ENCODE measurements at regions of chr14 and their contacts with region 1.

Region 1: GRCh38 chr14:104723648-104724406 is at the start of gene ADSS1:
- DNase-seq: peak; percentile 46
- H3K4me3 ChIP-seq: peak within 1 kb of the TSS; percentile 7 to 52 (median 35)
- H3K27ac ChIP-seq: no peak within 1 kb of the TSS
- H3K4me1 ChIP-seq: peaks cover 5% of the 10 kb centered on the region
- H3K27me3 ChIP-seq: no peaks in the 10 kb centered on the region
- CTCF ChIP-seq: peak; percentile 93 to 97
- POLR2A ChIP-seq: peak; percentile 67
- total RNA-seq, gene ADSS1: 1.9 and 2.7 TPM in 2 replicates

Region 2: DNA sequence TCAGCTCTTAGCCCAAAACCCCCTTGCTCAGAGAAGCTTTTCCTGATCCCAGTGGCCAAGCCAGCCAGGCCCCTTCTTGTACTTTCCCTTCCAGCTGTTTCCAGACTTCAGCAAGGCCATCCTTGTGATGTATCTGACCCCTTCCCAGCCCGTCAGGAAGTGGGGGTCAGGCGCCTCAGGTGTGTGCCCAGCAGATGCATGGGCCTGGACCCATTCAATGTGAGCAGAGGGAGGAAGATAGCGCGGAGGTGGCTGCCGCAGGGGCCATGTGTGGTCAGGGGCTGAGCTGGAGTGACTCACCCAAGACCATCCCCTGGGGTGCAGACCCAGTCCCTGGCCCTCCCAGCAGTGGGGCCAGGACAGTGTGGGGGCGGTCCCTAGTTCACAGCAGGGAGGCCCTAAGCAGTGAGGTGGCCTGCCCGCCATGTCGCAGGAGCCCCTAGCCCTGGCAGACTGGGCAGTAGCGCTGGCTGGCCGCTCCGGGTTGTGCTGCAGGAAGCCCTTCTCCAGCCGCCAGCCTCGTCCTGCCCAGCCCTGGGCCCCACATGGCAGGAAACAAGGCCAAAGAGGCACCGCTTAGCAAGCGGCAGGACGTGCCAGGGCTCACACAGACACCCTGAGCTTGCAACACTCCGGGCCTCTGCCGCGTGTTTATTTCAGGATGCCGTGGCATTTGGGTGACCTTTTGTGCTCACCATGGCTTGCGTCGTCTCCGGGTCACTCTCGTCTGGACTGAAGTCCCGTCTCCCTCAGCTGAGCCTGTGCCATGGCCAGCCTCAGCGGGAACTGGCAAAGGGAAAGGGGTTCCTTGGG is 12.2 kb after region 1 on chr14:
- CTCF ChIA-PET with region 1: interaction called, 11 read pairs
- POLR2A ChIA-PET with region 1: no interaction called
- dilution Hi-C with region 1: no loop called
- intact Hi-C with region 1: no loop called
- DNase-seq: peak; percentile 87
- H3K4me3 ChIP-seq: no peak overlapping the region
- H3K27ac ChIP-seq: peak overlapping the region; percentile 64
- H3K4me1 ChIP-seq: peaks cover 19% of the 10 kb centered on the region
- H3K27me3 ChIP-seq: no peaks in the 10 kb centered on the region
- CTCF ChIP-seq: no peak
- POLR2A ChIP-seq: peak; percentile 56